ENCODE measurements at regions of chr6 and their contacts with region 1.

Region 1: DNA sequence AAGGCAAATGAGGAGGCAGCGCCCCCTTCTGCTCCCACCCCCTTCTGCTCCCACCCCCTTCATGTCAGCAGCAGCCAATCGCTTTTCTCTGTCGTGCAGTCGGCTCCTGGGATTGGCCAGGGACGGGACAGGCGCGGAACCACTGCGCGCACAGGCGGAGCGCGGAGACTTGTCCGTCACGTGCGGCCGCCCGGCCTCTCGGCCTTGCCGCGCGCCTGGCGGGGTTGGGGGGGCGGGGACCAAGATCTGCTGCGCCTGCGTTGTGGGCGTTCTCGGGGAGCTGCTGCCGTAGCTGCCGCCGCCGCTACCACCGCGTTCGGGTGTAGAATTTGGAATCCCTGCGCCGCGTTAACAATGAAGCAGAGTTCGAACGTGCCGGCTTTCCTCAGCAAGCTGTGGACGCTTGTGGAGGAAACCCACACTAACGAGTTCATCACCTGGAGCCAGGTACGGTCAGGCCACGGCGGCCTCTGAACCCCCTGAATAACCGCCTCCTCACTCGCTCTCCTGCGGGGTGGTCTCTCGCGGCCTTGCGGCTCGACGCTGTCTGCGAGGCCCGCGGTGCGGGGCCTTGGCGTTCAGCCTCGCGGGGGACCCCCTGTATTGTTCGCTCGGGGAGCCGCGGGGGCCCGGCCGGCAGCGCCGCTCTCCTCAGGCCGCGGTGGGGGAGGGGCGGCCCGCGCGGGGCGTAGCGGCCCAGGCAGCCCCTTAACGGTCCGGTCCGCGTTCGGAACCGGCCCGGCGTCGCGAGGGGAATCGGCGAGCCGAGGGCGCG is at the start of gene HSF2:
- DNase-seq: peak; percentile 97 to 98
- ATAC-seq: peak; percentile 87 to 91
- H3K4me3 ChIP-seq: peak within 1 kb of the TSS; percentile 83 to 99 (median 92)
- H3K27ac ChIP-seq: peak within 1 kb of the TSS; percentile 93 to 100 (median 94)
- H3K4me1 ChIP-seq: peaks cover 27 to 44% of the 10 kb centered on the region in 2 donors
- H3K27me3 ChIP-seq: no peaks in the 10 kb centered on the region
- CTCF ChIP-seq: peak in 3 of 5 experiments; percentile 8 to 51 (median 44)
- POLR2A ChIP-seq: peak; percentile 87 to 89
- total RNA-seq, gene HSF2: 44.2 to 92.1 (median 68.3) TPM

Region 2: DNA sequence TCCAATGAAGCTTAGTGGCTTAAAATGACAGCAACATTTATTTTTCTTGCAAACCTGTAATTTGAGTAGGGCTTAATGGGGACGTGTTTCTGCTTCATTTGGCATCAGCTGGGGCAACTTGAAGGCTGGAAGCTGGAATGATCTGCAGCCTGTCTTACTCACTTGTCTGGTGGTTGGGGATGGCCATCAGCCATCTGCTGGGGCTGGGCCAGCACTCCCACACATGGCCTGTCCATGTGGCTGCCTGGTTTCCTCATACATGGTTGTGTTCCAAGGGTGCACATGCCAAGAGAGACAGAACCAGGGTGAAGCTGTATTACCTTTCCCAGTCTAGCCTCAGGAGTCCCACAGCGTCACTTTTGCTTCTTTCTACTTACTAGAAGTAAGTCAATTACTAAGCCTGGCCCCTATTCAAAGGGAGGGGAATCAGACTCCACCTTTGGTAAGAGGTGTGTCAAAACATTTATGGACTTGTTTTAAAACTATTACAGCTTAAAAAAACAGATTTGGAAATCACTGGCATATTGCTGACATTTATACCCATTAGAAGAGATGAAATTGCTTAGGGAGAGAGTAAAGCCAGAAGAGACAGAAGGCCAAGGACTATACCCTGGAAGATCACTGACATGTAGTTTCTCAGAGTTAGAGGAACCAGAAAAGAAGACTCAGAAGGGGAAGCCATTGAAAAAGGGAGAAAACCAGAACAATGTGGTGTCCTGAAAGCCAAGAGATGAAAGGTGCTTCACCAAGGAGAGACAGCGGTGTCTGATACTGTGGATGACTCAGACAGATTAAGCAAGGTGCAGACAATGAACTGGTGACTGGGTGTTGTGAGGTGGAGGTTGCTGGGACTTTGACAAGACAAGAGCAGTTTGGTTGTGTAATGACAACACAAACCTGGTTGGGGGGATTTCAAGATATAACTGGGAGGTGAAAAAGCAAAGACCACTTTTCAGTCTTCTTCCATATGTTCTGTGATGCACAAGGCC is 619.0 kb before region 1 on chr6:
- in situ Hi-C with region 1: no loop called
- intact Hi-C with region 1: loop called (anchors 10 kb)
- DNase-seq: peak; percentile 89 to 98
- ATAC-seq: peak; percentile 92 to 93
- H3K4me3 ChIP-seq: peak overlapping the region in 1 of 4 donors; percentile 32
- H3K27ac ChIP-seq: peak overlapping the region; percentile 75 to 90 (median 88)
- H3K4me1 ChIP-seq: peaks cover 10 to 26% of the 10 kb centered on the region in 2 donors
- H3K27me3 ChIP-seq: no peaks in the 10 kb centered on the region
- CTCF ChIP-seq: no peak
- POLR2A ChIP-seq: no peak

Region 3: DNA sequence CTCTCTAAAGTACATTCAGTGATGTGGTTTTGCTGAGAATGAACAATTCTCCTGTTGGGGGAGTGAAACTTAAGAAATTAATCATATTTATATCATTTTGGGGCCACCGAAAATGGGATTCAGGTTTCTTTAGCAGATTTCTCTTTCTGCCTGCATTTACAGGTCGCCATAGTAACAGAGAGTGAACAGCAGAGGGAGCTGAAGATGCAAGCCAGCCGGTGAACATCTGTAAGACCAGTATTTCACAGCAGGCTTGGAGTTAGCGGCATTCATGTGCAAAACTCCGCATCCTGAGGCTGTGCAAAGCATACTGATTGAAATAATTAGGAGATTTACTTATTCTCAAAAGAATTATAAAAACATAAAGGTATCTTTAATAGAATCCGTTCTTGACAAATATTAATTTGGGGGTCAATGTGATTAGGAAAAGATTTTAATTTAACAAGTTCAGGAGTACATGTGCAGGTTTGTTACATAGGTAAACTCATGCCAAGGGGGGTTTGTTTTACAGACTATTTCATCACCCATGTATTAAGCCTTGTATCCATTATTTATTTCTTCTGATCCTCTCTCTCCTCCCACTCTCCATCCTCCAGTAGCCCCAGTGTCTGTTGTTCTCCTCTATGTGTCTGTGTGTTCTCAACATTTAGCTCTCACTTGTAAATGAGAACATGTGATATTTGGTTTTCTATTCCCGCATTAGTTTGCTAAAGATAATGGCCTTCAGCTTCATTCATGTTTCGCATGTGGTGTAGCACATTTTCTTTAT is 17.9 kb before region 1 on chr6:
- in situ Hi-C with region 1: no loop called
- intact Hi-C with region 1: loop called (anchors 1 kb)
- DNase-seq: peak; percentile 16 to 45
- ATAC-seq: peak; percentile 75 to 89
- H3K4me3 ChIP-seq: no peak overlapping the region
- H3K27ac ChIP-seq: no peak overlapping the region
- H3K4me1 ChIP-seq: no peaks in the 10 kb centered on the region
- H3K27me3 ChIP-seq: no peaks in the 10 kb centered on the region
- CTCF ChIP-seq: peak; percentile 70 to 83 (median 73)
- POLR2A ChIP-seq: no peak

Region 4: GRCh38 chr6:122416825-122417224 is 17.3 kb after region 1 on chr6:
- in situ Hi-C with region 1: no loop called
- intact Hi-C with region 1: loop called (anchors 2 kb)
- DNase-seq: peak; percentile 25 to 34
- ATAC-seq: peak; percentile 95 to 98
- H3K4me3 ChIP-seq: peak overlapping the region in 1 of 4 donors; percentile 1
- H3K27ac ChIP-seq: peak overlapping the region; percentile 76 to 100 (median 88)
- H3K4me1 ChIP-seq: peaks cover 23 to 54% of the 10 kb centered on the region in 2 donors
- H3K27me3 ChIP-seq: no peaks in the 10 kb centered on the region
- CTCF ChIP-seq: no peak
- POLR2A ChIP-seq: no peak

Region 5: GRCh38 chr6:122471107-122472021 is 71.8 kb after region 1 on chr6 and contains the start of gene SERINC1:
- in situ Hi-C with region 1: loop called in 2 of 4 experiments (anchors 5 to 25 kb)
- intact Hi-C with region 1: loop called (anchors 1 kb)
- DNase-seq: peak; percentile 93 to 95
- ATAC-seq: peak; percentile 97
- H3K4me3 ChIP-seq: peak within 1 kb of the TSS; percentile 79 to 99 (median 90)
- H3K27ac ChIP-seq: peak within 1 kb of the TSS; percentile 94 to 99 (median 97)
- H3K4me1 ChIP-seq: peaks cover 33 to 47% of the 10 kb centered on the region in 2 donors
- H3K27me3 ChIP-seq: no peaks in the 10 kb centered on the region
- CTCF ChIP-seq: peak in 1 of 5 experiments; percentile 7
- POLR2A ChIP-seq: peak; percentile 86 to 91
- total RNA-seq, gene SERINC1: 161 to 273 (median 198) TPM

Region 6: DNA sequence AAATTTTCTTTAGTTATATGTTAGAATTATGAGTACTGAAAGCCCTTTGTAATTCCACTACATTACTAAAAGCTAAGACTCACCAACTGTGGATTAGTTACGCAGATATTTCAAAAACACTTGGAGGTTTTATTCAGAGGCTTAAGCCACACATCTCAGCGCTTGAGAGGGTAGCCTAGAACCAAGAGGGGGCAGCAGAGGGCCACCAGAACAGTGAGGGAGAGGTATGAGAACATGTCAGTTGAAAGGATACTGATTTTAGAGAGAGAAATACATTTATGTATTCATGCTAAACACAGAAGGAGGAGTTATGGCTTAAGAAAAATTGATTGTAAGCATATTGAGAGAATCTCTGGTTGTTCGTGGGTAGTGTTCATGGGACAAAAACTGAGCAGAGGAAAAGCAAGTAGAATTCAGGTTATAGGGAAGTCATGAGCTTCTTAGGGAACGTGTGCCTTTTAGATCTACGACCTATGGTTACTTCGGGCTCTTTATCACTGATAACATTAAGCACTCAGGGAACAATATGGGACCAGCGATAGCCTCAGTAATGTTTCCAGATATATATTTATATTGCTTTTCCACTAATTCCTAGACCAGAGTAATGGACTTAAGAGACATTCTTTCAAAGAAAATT is 92.5 kb after region 1 on chr6:
- in situ Hi-C with region 1: loop called in 1 of 4 experiments (anchors 25 kb)
- intact Hi-C with region 1: no loop called
- DNase-seq: peak; percentile 27 to 59
- ATAC-seq: peak; percentile 89 to 99
- H3K4me3 ChIP-seq: no peak overlapping the region
- H3K27ac ChIP-seq: no peak overlapping the region
- H3K4me1 ChIP-seq: no peaks in the 10 kb centered on the region
- H3K27me3 ChIP-seq: no peaks in the 10 kb centered on the region
- CTCF ChIP-seq: peak; percentile 50 to 89 (median 64)
- POLR2A ChIP-seq: no peak

Region 7: DNA sequence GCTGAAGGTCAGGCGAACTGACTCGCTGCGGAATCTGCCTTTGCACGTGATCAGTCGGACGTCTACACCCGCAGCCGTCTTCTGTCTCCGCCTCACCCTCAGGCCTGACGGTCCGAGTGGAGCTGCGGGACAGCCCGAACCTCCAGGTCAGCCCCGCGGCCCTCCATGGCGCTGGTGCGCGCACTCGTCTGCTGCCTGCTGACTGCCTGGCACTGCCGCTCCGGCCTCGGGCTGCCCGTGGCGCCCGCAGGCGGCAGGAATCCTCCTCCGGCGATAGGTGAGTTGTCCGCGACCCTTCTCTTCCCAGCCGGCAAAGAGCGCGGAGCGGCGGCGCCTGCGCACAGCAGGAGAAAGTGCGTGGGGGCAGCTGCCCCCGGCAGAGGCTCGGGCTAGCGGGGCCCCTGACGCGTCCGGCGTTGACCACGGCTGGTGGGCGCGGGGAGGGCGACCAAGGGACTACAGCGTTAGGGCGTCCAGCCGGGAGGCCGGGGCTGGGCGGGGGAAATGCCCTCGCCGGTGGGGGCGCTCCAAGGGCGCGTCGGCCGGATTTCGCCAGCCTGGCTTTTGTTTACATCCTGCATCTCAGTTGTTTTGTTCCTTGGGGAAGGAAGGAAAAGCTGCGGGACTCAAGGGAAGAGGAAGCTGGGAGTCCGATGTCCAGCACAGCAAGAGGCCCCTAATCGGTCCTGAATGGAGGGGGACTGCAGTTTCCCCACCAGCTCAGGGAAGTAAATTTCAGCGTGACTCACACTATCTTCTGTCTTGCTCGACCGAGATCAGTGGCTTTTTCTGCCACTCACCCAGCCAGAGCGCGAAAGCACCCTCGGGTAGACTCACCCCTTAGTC is 389.8 kb after region 1 on chr6 and contains the start of gene SMPDL3A:
- in situ Hi-C with region 1: no loop called
- intact Hi-C with region 1: loop called (anchors 5 kb)
- DNase-seq: peak; percentile 84 to 86
- ATAC-seq: peak; percentile 69 to 79
- H3K4me3 ChIP-seq: peak within 1 kb of the TSS; percentile 61 to 94 (median 80)
- H3K27ac ChIP-seq: peak within 1 kb of the TSS; percentile 93 to 98 (median 96)
- H3K4me1 ChIP-seq: peaks cover 36 to 45% of the 10 kb centered on the region in 2 donors
- H3K27me3 ChIP-seq: no peaks in the 10 kb centered on the region
- CTCF ChIP-seq: peak; percentile 22 to 45 (median 37)
- POLR2A ChIP-seq: peak; percentile 82 to 91
- total RNA-seq, gene SMPDL3A: 18.4 to 38.4 (median 32.6) TPM